ENCODE measurements at regions of chr15 and their contacts with region 1.

Region 1: GRCh38 chr15:91852741-91853510 is 582 bp upstream of the SLCO3A1 start:
- DNase-seq: peak; percentile 75
- H3K4me3 ChIP-seq: peak overlapping the region; percentile 41 to 82 (median 54)
- H3K27ac ChIP-seq: peak overlapping the region; percentile 88 to 93 (median 92)
- H3K4me1 ChIP-seq: peaks cover 42 to 47% of the 10 kb centered on the region in 2 donors
- H3K27me3 ChIP-seq: no peaks in the 10 kb centered on the region
- CTCF ChIP-seq: peak; percentile 19 to 84 (median 77)
- POLR2A ChIP-seq: no peak

Region 2: DNA sequence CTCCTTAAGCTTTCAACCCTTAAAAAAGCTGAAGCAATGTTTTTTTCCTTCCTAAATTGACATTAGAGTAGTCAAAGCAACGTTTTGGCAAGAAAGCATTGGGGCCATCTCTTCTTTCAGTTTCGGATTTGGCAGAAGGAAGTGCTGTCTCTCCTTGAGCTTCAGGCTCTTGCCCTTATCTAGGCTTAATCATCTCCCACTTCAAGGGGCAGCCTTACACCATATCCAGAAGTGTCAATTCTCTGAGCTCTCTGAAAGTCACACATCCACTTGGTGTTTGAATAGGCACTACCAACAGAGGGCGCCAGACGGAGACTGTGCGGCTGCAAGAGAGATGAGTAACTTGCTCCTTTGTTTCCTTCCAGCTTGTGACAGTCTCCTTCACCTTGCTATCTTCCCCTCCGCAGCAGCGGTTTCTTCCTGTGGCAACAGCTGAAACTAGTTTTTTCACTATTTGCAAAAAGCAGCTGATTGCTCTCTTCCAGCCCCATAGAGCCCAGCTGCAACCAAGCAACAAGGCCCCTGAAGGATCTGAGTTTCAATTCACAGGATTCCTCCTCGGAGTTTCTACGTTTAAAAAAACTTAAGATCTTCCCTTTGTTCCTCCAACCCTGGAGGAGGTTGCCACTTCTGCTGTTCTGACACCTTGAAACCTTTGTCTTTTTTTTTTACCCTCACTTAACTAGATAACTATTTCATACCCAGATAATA is 146.4 kb before region 1 on chr15:
- intact Hi-C with region 1: loop called (anchors 10 kb)
- DNase-seq: peak; percentile 77 to 86
- H3K4me3 ChIP-seq: no peak overlapping the region
- H3K27ac ChIP-seq: no peak overlapping the region
- H3K4me1 ChIP-seq: no peaks in the 10 kb centered on the region
- H3K27me3 ChIP-seq: no peaks in the 10 kb centered on the region
- CTCF ChIP-seq: peak; percentile 86 to 94 (median 89)
- POLR2A ChIP-seq: no peak

Region 3: DNA sequence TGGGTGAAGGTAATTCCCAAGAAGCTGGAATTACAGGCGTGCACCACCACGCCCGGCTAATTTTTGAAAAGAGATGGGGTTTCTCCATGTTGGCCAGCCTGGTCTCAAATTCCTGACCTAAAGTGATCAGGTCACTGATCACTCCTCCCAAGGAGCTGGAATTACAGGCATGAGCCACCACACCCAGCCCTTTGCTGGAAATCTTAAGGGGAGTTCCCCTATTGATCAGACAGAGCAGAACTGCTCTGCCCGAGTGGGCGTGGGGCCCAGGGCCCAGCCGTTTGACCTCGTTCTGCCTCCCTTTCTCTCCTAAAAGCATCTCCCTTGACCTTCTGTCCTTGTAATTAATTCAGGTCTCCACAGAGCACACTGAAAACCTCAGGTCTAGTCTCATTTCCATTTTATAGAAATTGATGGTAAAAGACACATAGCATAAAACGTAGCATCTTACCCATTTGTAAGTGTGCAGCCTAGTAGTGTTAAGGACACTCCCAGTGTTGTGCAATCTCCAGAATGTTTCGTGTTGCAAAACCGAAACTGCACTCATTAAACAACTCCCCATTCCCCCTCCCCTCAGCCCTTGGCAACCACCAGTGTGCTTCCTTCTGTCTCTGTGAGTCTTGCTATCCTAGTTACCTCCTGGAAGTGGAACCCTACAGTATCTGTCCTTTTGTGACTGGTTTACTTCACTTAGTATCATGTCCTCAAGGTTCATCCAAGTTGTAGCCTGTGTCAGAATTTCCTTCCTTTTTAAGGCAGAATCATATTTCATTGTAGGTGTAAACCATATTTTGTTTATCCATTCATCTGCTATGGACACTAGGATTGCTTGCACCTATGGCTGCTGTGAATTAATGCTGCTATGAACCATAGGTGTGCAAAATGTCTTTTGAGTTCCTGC is 90.0 kb after region 1 on chr15:
- intact Hi-C with region 1: loop called (anchors 10 kb)
- DNase-seq: peak; percentile 88
- H3K4me3 ChIP-seq: no peak overlapping the region
- H3K27ac ChIP-seq: peak overlapping the region; percentile 52 to 71 (median 65)
- H3K4me1 ChIP-seq: peaks cover 50 to 73% of the 10 kb centered on the region in 2 donors
- H3K27me3 ChIP-seq: no peaks in the 10 kb centered on the region
- CTCF ChIP-seq: no peak
- POLR2A ChIP-seq: no peak

Measured in thyroid gland (tissue), 4 donors.